ENCODE measurements at regions of chr5 and their contacts with region 1.

Region 1: DNA sequence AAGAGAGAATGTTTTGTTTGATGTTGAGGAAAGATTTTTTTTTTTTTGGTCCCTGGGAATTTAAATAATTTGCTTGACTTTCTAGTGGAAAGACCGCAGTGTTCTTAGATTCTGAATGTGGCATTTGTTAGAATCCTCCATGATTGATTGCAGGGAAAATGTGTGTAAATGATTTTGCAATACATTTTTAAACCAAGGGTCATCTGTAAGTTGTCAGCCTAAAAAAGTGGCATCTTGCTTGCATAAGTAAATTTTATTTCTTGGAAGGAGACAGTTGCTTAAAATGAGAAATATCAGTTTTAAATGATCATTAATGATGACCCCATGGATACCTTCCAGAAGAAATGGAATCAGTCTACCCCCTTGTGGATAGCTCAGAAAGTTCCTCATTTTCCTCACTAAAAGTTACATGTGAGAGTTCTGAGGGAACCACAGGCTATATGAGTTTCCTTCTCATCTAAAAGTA is 105.1 kb upstream of the SLC25A48 start:
- DNase-seq: peak in 1 of 2 experiments; percentile 34
- H3K4me3 ChIP-seq: no peak overlapping the region
- H3K4me3 Mint-ChIP-seq: no peak overlapping the region
- H3K27ac Mint-ChIP-seq: no peak overlapping the region
- H3K4me1 ChIP-seq: no peaks in the 10 kb centered on the region
- H3K4me1 Mint-ChIP-seq: no peaks in the 10 kb centered on the region
- H3K27me3 ChIP-seq: no peaks in the 10 kb centered on the region
- H3K27me3 Mint-ChIP-seq: no peaks in the 10 kb centered on the region
- CTCF ChIP-seq: peak; percentile 37 to 59

Region 2: GRCh38 chr5:135560858-135561257 is 168.5 kb before region 1 on chr5:
- CTCF ChIA-PET with region 1: interaction called, 22 read pairs
- POLR2A ChIA-PET with region 1: no interaction called
- intact Hi-C with region 1: loop called (anchors 1 kb)
- DNase-seq: peak; percentile 83 to 86
- H3K4me3 ChIP-seq: no peak overlapping the region
- H3K4me3 Mint-ChIP-seq: peak overlapping the region; percentile 27
- H3K27ac Mint-ChIP-seq: no peak overlapping the region
- H3K4me1 ChIP-seq: no peaks in the 10 kb centered on the region; the same call in 1 of the 2 replicates
- H3K4me1 Mint-ChIP-seq: peaks cover 12% of the 10 kb centered on the region
- H3K27me3 ChIP-seq: no peaks in the 10 kb centered on the region
- H3K27me3 Mint-ChIP-seq: peaks cover 5% of the 10 kb centered on the region
- CTCF ChIP-seq: peak; percentile 87 to 92

Region 3: GRCh38 chr5:135641734-135642361 is 87.5 kb before region 1 on chr5:
- CTCF ChIA-PET with region 1: no interaction called
- POLR2A ChIA-PET with region 1: no interaction called
- intact Hi-C with region 1: loop called (anchors 2 kb)
- DNase-seq: peak in 1 of 2 experiments; percentile 63
- H3K4me3 ChIP-seq: no peak overlapping the region
- H3K4me3 Mint-ChIP-seq: no peak overlapping the region
- H3K27ac Mint-ChIP-seq: no peak overlapping the region
- H3K4me1 ChIP-seq: peaks cover 25% of the 10 kb centered on the region
- H3K4me1 Mint-ChIP-seq: peaks cover 17% of the 10 kb centered on the region
- H3K27me3 ChIP-seq: no peaks in the 10 kb centered on the region
- H3K27me3 Mint-ChIP-seq: peaks cover 7% of the 10 kb centered on the region
- CTCF ChIP-seq: no peak

Region 4: DNA sequence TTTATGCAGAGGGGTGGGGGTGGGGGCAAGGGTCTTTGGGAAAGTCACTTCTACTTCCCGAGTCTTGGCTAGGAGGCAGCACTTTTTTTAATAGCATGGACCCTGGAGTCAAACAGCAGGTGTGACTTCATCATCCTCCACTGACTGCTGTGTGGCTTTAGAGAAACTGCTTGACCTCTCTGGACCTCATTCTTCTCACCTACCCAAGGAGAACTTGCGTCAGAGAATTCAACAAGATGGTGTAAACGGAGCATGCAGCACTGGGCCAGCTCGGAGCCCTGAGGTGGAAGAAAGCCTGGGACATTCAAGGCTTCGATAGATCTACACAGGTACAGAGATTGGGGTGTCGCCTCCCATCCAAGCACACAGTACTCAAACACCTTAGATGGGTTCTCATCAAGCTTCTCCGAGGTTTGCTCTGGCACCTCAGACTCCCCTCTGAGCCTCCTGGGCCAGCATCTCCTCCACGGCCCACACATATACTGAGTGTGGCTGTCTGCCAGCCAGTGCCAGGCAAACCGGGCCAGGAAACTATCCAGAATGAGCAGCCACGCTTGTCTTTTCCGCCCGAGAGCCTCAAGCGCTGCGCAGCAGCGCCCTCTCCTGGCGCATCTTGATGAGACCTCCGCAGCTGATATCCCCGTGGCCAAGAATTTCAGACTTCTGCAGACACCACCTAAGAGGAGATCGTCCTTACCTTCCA is 100.5 kb after region 1 on chr5:
- CTCF ChIA-PET with region 1: interaction called, 5 read pairs
- POLR2A ChIA-PET with region 1: no interaction called
- intact Hi-C with region 1: loop called (anchors 1 kb)
- DNase-seq: peak; percentile 63 to 75
- H3K4me3 ChIP-seq: no peak overlapping the region
- H3K4me3 Mint-ChIP-seq: no peak overlapping the region
- H3K27ac Mint-ChIP-seq: no peak overlapping the region
- H3K4me1 ChIP-seq: no peaks in the 10 kb centered on the region
- H3K4me1 Mint-ChIP-seq: peaks cover 7% of the 10 kb centered on the region
- H3K27me3 ChIP-seq: peaks cover 5% of the 10 kb centered on the region; the same call in 1 of the 2 replicates
- H3K27me3 Mint-ChIP-seq: peaks cover 39% of the 10 kb centered on the region
- CTCF ChIP-seq: peak; percentile 86 to 93